HCT116 (cell line): ENCODE measurements at regions of chr17 and their contacts with region 1.

Region 1: DNA sequence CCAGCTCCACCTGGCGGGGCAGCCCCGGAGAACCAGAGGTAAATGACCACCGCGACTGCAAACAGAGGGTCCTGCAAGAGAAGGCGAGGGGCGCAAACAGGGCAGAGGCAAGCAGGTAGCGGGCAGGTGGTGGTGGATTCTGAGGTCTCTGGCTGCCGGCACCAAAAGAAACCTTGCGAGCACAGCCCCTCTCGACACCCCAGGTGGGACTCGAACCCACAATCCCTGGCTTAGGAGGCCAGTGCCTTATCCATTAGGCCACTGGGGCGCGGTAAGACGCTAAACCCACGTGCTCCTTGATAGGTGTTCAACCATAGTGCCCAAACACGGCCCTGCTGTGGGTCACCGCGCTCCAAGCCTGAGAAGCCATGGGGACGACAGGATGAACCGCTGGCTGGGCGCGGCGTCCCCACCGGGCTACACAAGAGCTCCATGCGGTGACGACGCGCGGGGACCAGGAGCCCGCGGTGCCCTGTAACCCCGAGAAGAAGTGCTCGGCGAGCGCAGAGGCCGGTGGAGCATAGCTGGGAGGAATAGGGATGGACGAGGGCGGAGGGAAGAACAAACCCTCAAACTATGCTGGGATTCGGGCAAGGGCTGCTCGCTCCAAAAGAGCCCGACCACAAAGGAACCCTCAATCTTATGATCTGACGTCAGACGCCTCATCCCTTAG is 12.4 kb downstream of the ATP5PD start:
- DNase-seq: peak; percentile 93
- ATAC-seq: peak; percentile 62
- H3K4me3 ChIP-seq: peak overlapping the region; percentile 46 to 57
- H3K27ac ChIP-seq: peak overlapping the region; percentile 87
- H3K4me1 ChIP-seq: peaks cover 45 to 58% of the 10 kb centered on the region in 2 experiments
- H3K27me3 ChIP-seq: no peaks in the 10 kb centered on the region
- CTCF ChIP-seq: peak in 2 of 3 experiments; percentile 7 to 37; a peak in 1 of 6 replicates
- POLR2A ChIP-seq: no peak
- RAD21 ChIP-seq: no peak

Region 2: DNA sequence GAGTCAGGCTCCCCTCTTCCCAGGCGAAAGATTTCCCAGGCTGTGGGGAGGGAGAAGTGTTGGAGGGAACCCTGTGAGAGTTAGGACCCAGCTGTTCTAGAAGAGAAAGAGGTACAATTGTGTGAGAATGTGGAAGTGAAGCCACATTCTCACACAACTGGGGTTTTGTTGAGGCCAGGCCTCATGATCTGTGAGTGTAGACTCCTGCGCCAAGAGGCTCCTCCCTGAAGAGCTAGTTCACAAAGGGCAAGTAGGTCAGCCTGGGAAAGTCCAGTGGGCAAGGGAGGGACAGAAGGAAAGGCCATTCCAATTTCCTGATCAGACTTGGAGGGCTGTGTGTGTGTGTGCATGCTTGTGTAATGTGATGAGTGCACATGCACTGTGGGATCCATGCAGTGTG is 336.9 kb before region 1 on chr17:
- CTCF ChIA-PET with region 1: no interaction called
- POLR2A ChIA-PET with region 1: no interaction called
- RAD21 ChIA-PET with region 1: no interaction called
- intact Hi-C with region 1: no loop called
- DNase-seq: no peak
- ATAC-seq: no peak
- H3K4me3 ChIP-seq: no peak overlapping the region
- H3K27ac ChIP-seq: no peak overlapping the region
- H3K4me1 ChIP-seq: no peaks in the 10 kb centered on the region
- H3K27me3 ChIP-seq: peaks cover 13% of the 10 kb centered on the region; the same call in 1 of the 2 replicates
- CTCF ChIP-seq: no peak
- POLR2A ChIP-seq: no peak
- RAD21 ChIP-seq: no peak

Region 3: DNA sequence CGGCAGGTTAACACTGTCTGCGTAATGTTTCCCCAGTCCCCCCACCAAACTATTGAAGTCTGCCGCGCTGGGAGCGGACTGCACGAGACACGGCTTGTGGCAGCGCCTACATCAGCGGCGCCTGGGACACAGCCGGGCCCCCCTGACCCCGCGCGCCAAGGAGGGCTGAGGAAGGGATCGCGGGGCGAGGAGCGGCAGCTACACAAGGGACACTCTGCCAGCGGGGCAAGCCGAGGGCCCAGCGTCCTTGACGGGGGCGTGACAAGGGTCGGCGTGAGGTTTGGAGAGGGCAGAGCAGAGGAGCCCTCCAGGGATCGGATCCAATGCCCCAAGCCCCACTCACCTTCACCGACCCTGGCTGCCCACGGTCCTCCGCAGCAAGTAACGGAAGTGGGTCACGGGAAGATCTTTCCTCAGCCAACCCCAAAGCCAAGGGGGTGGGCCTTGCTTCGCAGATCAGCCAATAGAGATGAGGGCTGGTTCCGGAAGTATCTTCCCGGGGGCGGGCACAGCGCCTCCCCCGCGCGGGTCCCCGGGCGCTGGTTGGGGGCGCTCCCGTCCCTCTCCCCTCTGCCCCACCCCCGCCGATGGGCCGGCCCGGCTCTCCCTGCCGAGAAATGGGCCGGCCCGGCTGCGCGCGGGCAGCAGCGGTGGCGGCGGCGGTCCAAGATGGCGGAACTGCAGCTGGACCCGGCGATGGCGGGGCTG is 12.4 kb after region 1 on chr17 and contains the starts of genes ATP5PD and KCTD2:
- CTCF ChIA-PET with region 1: interaction called, 12 read pairs
- POLR2A ChIA-PET with region 1: interaction called, 13 read pairs
- RAD21 ChIA-PET with region 1: no interaction called
- intact Hi-C with region 1: loop called (anchors 1 kb)
- DNase-seq: peak; percentile 97
- ATAC-seq: peak; percentile 91
- H3K4me3 ChIP-seq: peak within 1 kb of the TSS; percentile 86 to 98
- H3K27ac ChIP-seq: peak within 1 kb of the TSS; percentile 99
- H3K4me1 ChIP-seq: peaks cover 10 to 17% of the 10 kb centered on the region in 2 experiments; a peak in 3 of 4 replicates
- H3K27me3 ChIP-seq: no peaks in the 10 kb centered on the region
- CTCF ChIP-seq: no peak
- POLR2A ChIP-seq: peak; percentile 96
- RAD21 ChIP-seq: no peak; the same call in 1 of the 2 replicates
- total RNA-seq, gene ATP5PD: 407 TPM
- total RNA-seq, gene KCTD2: 23.3 TPM